ENCODE measurements at regions of chr9 and their contacts with region 1.

Region 1: DNA sequence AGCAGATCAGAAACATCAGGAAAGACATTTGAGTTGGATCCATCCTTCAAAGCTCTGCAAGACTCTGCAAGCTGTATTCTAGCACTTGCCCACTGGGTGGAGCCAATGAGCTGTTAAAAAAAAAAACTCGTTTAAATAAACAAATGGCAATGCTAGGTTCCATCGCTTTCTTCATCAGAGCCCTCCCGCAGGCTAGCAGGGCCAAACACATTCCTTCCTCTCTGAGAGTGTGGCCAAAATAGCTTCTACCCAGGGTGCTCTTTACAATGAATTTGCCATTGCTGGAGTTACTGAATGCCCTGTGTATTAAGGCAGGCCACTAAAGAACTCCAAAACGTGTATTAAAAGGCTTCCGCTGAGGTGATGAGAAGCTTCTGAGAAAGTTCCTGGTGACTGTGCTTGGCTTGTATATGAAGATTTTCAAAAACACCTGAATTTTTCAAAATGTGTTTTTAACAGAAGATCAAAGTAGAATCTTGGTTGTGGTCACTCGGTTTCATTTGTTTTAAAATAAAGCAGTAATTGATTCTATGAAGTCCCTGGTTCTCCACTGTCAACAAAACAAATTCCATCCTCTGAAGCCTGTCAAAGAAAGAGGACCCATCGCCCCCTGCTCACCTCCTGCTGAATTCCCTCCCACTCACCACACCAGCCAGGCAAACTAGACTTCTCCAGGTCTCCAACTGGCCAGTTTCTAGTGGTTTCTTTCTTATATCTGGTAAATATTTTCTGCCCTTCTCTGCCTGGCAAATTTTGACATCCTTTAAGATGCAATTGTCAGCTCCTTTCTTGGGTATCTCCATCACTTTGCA is 36.5 kb upstream of the EQTN start:
- DNase-seq: peak; percentile 84
- ATAC-seq: peak; percentile 96
- H3K4me3 ChIP-seq: no peak overlapping the region
- H3K4me3 Mint-ChIP-seq: no peak overlapping the region
- H3K27ac ChIP-seq: no peak overlapping the region
- H3K27ac Mint-ChIP-seq: no peak overlapping the region
- H3K4me1 ChIP-seq: peaks cover 6 to 12% of the 10 kb centered on the region in 2 donors
- H3K4me1 Mint-ChIP-seq: peaks cover 10% of the 10 kb centered on the region
- H3K27me3 ChIP-seq: no peaks in the 10 kb centered on the region
- H3K27me3 Mint-ChIP-seq: no peaks in the 10 kb centered on the region
- CTCF ChIP-seq: peak; percentile 91

Region 2: DNA sequence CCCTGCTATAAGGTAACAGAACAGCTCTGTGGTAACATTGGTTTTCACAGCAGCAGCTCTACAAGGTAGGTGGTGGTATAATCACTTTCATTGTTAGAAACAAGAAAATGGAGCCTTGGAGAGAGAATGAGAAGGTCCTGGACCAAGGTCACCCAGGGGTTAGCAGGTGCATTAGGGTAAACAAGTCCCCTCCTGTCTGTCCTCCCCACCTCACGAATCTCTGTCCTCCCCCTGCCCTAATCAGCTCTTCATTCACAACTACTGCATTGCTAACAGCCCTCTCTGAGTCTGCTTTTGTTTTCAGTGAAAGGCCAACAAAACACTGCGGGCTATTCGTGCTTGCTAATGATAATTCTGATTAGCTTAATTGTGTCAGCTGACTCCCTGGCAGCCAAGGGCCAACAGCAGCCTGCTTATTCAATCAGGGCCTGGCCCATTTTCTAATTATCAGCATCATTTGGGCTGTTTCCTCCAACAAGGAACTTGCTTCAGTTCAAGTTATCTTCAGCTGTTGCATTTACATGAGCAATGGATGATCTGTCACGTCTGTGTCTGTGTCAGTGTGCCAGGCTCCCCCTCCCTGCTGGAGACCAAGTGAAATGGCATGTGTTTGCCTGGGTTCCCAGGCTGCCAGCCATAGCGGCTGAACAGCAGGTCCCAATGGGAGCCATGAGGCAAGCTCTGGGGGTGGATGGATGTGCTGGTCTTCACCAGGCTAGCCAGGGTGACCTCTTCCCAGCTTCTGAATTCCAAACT is 20.2 kb after region 1 on chr9:
- CTCF ChIA-PET with region 1: interaction called, 14 read pairs
- POLR2A ChIA-PET with region 1: no interaction called
- intact Hi-C with region 1: loop called (anchors 1 kb)
- DNase-seq: peak; percentile 48
- ATAC-seq: peak; percentile 68
- H3K4me3 ChIP-seq: no peak overlapping the region
- H3K4me3 Mint-ChIP-seq: no peak overlapping the region
- H3K27ac ChIP-seq: peak overlapping the region; percentile 0 to 58
- H3K27ac Mint-ChIP-seq: peak overlapping the region; percentile 84
- H3K4me1 ChIP-seq: peaks cover 31 to 34% of the 10 kb centered on the region in 2 donors
- H3K4me1 Mint-ChIP-seq: peaks cover 54% of the 10 kb centered on the region
- H3K27me3 ChIP-seq: no peaks in the 10 kb centered on the region
- H3K27me3 Mint-ChIP-seq: no peaks in the 10 kb centered on the region
- CTCF ChIP-seq: peak; percentile 16

Region 3: GRCh38 chr9:27377147-27377807 is 43.8 kb after region 1 on chr9:
- CTCF ChIA-PET with region 1: interaction called, 11 read pairs
- POLR2A ChIA-PET with region 1: no interaction called
- intact Hi-C with region 1: no loop called
- DNase-seq: no peak
- ATAC-seq: no peak
- H3K4me3 ChIP-seq: peak overlapping the region in 4 of 5 experiments; percentile 8 to 51 (median 28)
- H3K4me3 Mint-ChIP-seq: peak overlapping the region; percentile 74
- H3K27ac ChIP-seq: peak overlapping the region; percentile 81 to 85
- H3K27ac Mint-ChIP-seq: peak overlapping the region; percentile 85
- H3K4me1 ChIP-seq: peaks cover 64 to 72% of the 10 kb centered on the region in 2 donors
- H3K4me1 Mint-ChIP-seq: peaks cover 68% of the 10 kb centered on the region
- H3K27me3 ChIP-seq: no peaks in the 10 kb centered on the region
- H3K27me3 Mint-ChIP-seq: no peaks in the 10 kb centered on the region
- CTCF ChIP-seq: no peak

Region 4: GRCh38 chr9:27460226-27461023 is 127.0 kb after region 1 on chr9:
- CTCF ChIA-PET with region 1: interaction called, 12 read pairs
- POLR2A ChIA-PET with region 1: no interaction called
- intact Hi-C with region 1: loop called (anchors 5 kb)
- DNase-seq: peak; percentile 84
- ATAC-seq: peak; percentile 93
- H3K4me3 ChIP-seq: no peak overlapping the region
- H3K4me3 Mint-ChIP-seq: peak overlapping the region; percentile 65
- H3K27ac ChIP-seq: peak overlapping the region in 1 of 2 donors; percentile 15
- H3K27ac Mint-ChIP-seq: peak overlapping the region; percentile 80
- H3K4me1 ChIP-seq: peaks cover 31 to 41% of the 10 kb centered on the region in 2 donors
- H3K4me1 Mint-ChIP-seq: peaks cover 55% of the 10 kb centered on the region
- H3K27me3 ChIP-seq: no peaks in the 10 kb centered on the region
- H3K27me3 Mint-ChIP-seq: no peaks in the 10 kb centered on the region
- CTCF ChIP-seq: no peak

Region 5: DNA sequence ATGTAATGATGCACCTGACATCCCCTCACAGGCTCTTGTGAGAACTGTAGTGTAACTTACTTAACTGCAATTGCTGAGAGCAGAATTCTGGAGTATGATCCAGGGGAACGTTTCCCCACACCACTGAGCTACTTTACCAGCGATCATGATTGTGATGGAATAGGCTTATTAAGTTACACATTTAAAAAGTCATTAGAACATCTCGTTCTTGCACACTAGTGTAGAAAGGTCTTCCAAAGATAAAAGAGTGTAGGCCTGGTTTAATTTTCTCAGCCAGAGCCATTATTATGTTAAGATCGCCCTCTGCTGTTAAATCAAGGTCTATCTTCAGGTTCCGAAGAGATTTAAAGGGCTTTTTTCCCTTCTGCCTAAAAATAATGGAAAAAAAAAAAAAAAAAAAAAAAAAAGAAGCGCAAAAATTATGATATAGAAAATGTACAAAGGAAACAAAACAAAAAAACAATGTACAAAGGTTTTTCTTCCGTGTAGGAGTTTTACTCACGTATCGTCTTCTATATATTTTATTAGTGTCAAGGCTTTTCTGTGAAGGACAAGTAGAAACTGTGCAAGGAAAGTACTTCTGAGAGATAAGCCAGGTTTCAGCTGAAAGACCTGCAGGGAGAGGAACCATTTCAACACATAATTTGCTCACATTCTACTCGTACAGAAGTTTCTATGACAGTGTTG is 214.8 kb after region 1 on chr9:
- CTCF ChIA-PET with region 1: interaction called, 115 read pairs
- POLR2A ChIA-PET with region 1: no interaction called
- intact Hi-C with region 1: loop called (anchors 1 kb)
- DNase-seq: peak; percentile 59
- ATAC-seq: peak; percentile 33
- H3K4me3 ChIP-seq: no peak overlapping the region
- H3K4me3 Mint-ChIP-seq: no peak overlapping the region
- H3K27ac ChIP-seq: no peak overlapping the region
- H3K27ac Mint-ChIP-seq: no peak overlapping the region
- H3K4me1 ChIP-seq: no peaks in the 10 kb centered on the region
- H3K4me1 Mint-ChIP-seq: no peaks in the 10 kb centered on the region
- H3K27me3 ChIP-seq: no peaks in the 10 kb centered on the region
- H3K27me3 Mint-ChIP-seq: no peaks in the 10 kb centered on the region
- CTCF ChIP-seq: peak; percentile 68

Measured in B cell (primary cell).